Psoas muscle (tissue), 8 donors: ENCODE measurements at regions of chrX and their contacts with region 1.

Region 1: DNA sequence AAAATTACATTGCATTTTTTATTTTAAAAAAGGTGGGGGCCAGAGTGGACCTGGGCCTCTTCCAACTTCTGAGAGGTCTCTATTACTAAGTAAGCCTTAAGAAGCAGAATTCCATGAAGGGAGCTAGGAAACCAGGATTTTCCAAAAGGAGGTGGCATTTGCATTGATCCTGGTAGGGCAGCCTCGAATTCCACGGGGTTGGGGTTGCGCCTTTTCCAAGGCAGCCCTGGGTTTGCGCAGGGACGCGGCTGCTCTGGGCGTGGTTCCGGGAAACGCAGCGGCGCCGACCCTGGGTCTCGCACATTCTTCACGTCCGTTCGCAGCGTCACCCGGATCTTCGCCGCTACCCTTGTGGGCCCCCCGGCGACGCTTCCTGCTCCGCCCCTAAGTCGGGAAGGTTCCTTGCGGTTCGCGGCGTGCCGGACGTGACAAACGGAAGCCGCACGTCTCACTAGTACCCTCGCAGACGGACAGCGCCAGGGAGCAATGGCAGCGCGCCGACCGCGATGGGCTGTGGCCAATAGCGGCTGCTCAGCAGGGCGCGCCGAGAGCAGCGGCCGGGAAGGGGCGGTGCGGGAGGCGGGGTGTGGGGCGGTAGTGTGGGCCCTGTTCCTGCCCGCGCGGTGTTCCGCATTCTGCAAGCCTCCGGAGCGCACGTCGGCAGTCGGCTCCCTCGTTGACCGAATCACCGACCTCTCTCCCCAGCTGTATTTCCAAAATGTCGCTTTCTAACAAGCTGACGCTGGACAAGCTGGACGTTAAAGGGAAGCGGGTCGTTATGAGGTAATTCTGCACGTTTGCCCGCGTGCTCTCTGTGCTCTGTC is at the start of gene PGK1:
- DNase-seq: peak; percentile 96 to 98
- ATAC-seq: peak; percentile 93 to 95 (median 94)
- H3K4me3 ChIP-seq: peak within 1 kb of the TSS; percentile 79
- H3K27ac ChIP-seq: peak within 1 kb of the TSS; percentile 92
- H3K4me1 ChIP-seq: peaks cover 7% of the 10 kb centered on the region
- H3K27me3 ChIP-seq: peaks cover 0 to 3% (median 0%) of the 10 kb centered on the region in 3 donors
- CTCF ChIP-seq: no peak
- total RNA-seq, gene PGK1: 246 to 372 (median 319) TPM

Region 2: GRCh38 chrX:77899081-77899828 is 204.6 kb before region 1 on chrX and contains the start of gene COX7B:
- intact Hi-C with region 1: loop called in 1 of 2 experiments (anchors 10 kb)
- DNase-seq: peak in 1 of 2 donors; percentile 58
- ATAC-seq: peak; percentile 74 to 83 (median 81)
- H3K4me3 ChIP-seq: peak within 1 kb of the TSS; percentile 72
- H3K27ac ChIP-seq: peak within 1 kb of the TSS; percentile 89
- H3K4me1 ChIP-seq: peaks cover 6% of the 10 kb centered on the region
- H3K27me3 ChIP-seq: peaks cover 0 to 4% (median 0%) of the 10 kb centered on the region in 3 donors
- CTCF ChIP-seq: peak; percentile 34
- total RNA-seq, gene COX7B: 566 to 780 (median 686) TPM

Region 3: DNA sequence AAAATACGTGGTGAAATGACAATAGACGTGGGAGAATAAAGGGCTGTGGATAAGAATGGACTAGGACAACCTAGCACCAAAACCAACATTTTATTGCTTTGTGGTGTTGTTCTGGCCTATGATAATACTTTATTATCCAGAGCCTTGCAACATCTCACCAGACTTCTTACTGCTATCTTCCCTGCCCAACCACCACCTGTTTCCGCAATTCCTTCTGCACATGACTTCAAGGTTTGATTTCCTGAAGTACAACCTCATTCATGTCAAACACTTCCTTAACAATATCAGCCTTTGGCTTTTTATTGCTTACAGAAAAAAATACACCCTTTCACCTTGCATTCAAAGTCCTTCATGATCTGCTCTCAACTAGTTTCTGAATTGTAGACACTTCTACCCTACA is 470.5 kb after region 1 on chrX:
- intact Hi-C with region 1: no loop called
- DNase-seq: no peak
- ATAC-seq: no peak
- H3K4me3 ChIP-seq: no peak overlapping the region
- H3K27ac ChIP-seq: no peak overlapping the region
- H3K4me1 ChIP-seq: no peaks in the 10 kb centered on the region
- H3K27me3 ChIP-seq: peaks cover 0 to 4% (median 0%) of the 10 kb centered on the region in 3 donors
- CTCF ChIP-seq: no peak